Activated T-helper 2 cell treated with anti-CD3 and anti-CD28 coated beads, Interferon-gamma antibody, Interleukin-2, Interleukin-4, amounts not matched to agents 10 μg/mL and 5 μg/mL and 100 μg/mL, durations not matched to agents 14 hours and 24 hours and 36 hours (primary cell): ENCODE measurements at regions of chr13 and their contacts with region 1.

Region 1: DNA sequence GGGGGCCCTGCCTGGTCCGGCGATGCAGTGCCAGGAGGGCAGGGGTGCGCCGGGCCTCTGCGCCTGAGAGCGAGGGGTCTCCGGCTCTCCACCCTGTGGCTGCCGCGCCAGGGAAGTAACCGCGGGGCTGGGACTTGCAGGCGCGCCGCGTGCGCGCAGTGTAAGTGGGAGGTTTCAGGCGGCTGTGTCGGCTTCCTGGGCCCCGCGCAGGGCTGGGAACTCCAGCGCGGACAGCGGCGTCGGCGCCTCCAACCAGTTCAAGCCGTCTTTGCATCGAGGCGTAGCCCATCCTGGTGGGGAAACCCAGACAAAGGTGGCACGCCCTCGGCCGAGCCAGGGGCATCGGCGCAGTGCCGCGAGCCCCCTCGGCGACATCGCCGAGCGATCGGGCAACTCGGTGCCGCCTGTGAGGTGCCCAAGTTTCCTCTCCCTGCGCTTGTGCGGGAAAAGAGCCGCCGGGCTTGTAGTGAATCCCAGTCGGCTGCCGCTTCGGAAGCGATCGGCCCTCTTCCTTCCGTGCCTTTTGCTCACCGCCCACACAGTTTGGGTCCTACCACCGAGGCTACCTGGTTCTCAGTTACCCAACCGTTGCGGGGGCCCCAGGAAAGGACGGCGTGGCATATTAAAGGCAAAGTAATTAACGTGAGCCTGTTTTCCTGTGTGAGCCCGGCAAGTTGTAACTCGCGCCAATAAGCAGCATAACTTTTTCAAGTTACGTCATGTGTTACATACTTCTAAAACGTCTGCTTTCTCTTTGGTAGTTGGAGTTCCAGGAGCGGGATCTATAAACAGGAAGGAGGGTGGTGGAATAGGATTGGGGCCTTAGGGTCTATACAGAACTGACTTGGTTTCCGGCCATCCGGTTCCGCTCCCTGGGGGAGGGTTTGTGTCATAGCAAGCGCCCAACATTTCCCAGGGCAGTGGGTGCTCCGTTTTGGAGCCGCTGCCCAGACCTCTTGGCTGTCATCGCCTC is 1.2 kb downstream of the LRCH1 start:
- DNase-seq: peak; percentile 63
- H3K4me3 Mint-ChIP-seq: peak overlapping the region; percentile 91
- H3K27ac Mint-ChIP-seq: peak overlapping the region; percentile 68
- H3K4me1 Mint-ChIP-seq: peaks cover 40% of the 10 kb centered on the region
- H3K27me3 Mint-ChIP-seq: peaks cover 4% of the 10 kb centered on the region

Region 2: GRCh38 chr13:46593398-46593797 is 39.2 kb after region 1 on chr13:
- intact Hi-C with region 1: loop called (anchors 2 kb)
- DNase-seq: peak; percentile 15
- H3K4me3 Mint-ChIP-seq: no peak overlapping the region
- H3K27ac Mint-ChIP-seq: peak overlapping the region; percentile 3
- H3K4me1 Mint-ChIP-seq: peaks cover 51% of the 10 kb centered on the region
- H3K27me3 Mint-ChIP-seq: peaks cover 6% of the 10 kb centered on the region

Region 3: GRCh38 chr13:46684287-46685001 is 130.3 kb after region 1 on chr13:
- intact Hi-C with region 1: loop called (anchors 2 kb)
- DNase-seq: no peak
- H3K4me3 Mint-ChIP-seq: no peak overlapping the region
- H3K27ac Mint-ChIP-seq: no peak overlapping the region
- H3K4me1 Mint-ChIP-seq: peaks cover 22% of the 10 kb centered on the region
- H3K27me3 Mint-ChIP-seq: no peaks in the 10 kb centered on the region

Region 4: DNA sequence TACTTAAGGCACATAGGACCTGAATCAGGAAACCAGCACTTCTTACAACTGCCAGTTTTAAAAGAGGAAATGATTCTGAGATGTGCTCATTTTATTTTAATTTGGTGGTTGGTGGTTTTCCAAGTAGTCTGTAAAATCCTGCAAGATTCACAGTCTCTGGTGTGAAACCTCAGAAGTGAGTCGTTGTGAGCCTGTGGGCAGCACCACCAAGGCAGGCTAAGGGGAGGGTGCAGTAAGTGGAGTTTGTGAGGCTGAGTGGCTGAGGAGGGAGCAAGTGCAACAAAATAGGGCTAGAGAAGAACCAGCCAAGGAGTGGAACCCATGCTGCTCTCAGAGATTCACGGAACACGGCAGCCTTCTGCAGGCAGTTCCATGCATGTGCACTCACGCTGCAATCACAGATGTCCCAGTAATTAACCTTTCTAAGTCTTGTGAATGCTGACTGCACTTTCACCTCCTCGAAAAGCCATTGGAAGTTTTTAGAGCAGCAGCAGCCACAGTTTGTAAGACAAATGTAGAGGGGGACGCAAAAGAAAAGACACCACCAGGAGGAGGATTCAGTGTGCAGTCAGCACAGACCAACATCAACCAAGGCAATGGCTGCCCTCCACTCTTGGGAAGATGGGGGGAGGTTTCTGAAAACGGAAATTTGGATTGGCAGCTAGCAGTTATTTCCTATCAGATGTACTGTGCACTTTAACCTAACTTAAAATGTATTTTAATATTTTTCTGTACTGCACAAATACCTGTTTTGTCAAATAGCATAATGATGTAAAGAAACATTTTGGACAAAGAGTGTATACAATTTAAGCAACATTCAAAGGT is 197.9 kb after region 1 on chr13:
- intact Hi-C with region 1: loop called (anchors 1 kb)
- DNase-seq: peak; percentile 50
- H3K4me3 Mint-ChIP-seq: peak overlapping the region; percentile 55
- H3K27ac Mint-ChIP-seq: peak overlapping the region; percentile 72
- H3K4me1 Mint-ChIP-seq: peaks cover 36% of the 10 kb centered on the region
- H3K27me3 Mint-ChIP-seq: no peaks in the 10 kb centered on the region